HEK293T (cell line): ENCODE measurements at regions of chr22 and their contacts with region 1.

Region 1: GRCh38 chr22:37686002-37686982 is at the start of gene NOL12:
- DNase-seq: peak; percentile 92

Region 2: GRCh38 chr22:37643225-37643847 is 43.0 kb before region 1 on chr22:
- CTCF ChIA-PET with region 1: interaction called, 24 read pairs
- POLR2A ChIA-PET with region 1: interaction called, 13 read pairs
- DNase-seq: peak; percentile 93

Region 3: GRCh38 chr22:37696657-37697537 is 10.6 kb after region 1 on chr22 and contains the start of gene TRIOBP:
- CTCF ChIA-PET with region 1: interaction called, 3 read pairs
- POLR2A ChIA-PET with region 1: interaction called, 13 read pairs
- DNase-seq: peak; percentile 98